IMR-90 (cell line): ENCODE measurements at regions of chr12 and their contacts with region 1.

Region 1: DNA sequence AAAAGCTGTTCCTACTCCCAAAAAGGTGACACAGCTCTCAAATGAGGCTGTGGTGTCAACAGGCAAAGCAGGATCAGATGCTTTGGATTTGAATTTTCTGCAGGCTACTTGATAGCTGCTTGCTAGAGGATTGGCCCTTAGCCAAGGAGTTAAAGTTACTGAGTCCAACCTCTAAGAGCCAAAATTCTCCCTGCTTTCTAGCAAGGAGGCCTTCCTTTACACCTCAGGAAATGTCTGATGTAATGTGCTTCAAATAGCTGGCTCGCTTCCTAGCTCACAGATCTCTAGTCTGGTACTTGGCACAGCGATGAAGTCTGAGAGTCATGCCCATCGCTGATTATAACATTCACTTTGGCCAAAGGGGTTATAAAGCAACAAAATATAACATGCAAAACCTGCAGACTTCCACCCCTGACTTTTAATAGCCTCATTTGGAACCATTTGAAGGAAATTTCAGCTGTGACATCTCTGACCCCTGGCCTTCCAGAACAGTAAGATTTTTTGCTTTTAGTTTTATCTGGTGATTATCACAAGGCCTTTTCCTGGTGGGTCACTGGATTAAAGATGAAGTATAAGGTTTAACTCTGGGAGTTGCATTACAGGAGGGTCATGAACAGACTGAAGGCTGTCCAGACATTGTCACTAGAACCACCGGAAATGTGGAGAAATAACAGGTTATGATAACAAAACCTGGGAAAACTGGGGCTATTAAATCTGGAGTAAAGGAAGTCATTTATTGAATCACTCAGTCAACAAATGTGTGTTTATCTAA is 189.7 kb downstream of the EPS8 start:
- DNase-seq: peak; percentile 81
- ATAC-seq: peak; percentile 56
- H3K4me3 ChIP-seq: no peak overlapping the region
- H3K27ac ChIP-seq: no peak overlapping the region
- H3K4me1 ChIP-seq: peaks cover 8% of the 10 kb centered on the region
- H3K27me3 ChIP-seq: no peaks in the 10 kb centered on the region
- CTCF ChIP-seq: no peak
- POLR2A ChIP-seq: no peak
- RAD21 ChIP-seq: no peak

Region 2: GRCh38 chr12:15842108-15842507 is 242.7 kb after region 1 on chr12:
- CTCF ChIA-PET with region 1: no interaction called
- POLR2A ChIA-PET with region 1: no interaction called
- dilution Hi-C with region 1: loop called (anchors 25 kb)
- in situ Hi-C with region 1: no loop called
- intact Hi-C with region 1: no loop called
- DNase-seq: peak; percentile 98
- ATAC-seq: peak; percentile 61
- H3K4me3 ChIP-seq: no peak overlapping the region
- H3K27ac ChIP-seq: peak overlapping the region; percentile 60; the same call in 1 of the 2 replicates
- H3K4me1 ChIP-seq: peaks cover 11% of the 10 kb centered on the region
- H3K27me3 ChIP-seq: no peaks in the 10 kb centered on the region
- CTCF ChIP-seq: no peak
- POLR2A ChIP-seq: no peak
- RAD21 ChIP-seq: 0 out of 2 replicates have a peak, but pooled peaks have one; percentile 3